ENCODE measurements at regions of chr5 and their contacts with region 1.

Region 1: GRCh38 chr5:154945695-154946301 is 4.9 kb downstream of the MRPL22 start:
- DNase-seq: no peak
- ATAC-seq: no peak
- H3K4me3 ChIP-seq: no peak overlapping the region
- H3K27ac ChIP-seq: no peak overlapping the region
- H3K4me1 ChIP-seq: no peaks in the 10 kb centered on the region; the same call in 1 of the 2 replicates
- H3K27me3 ChIP-seq: no peaks in the 10 kb centered on the region
- CTCF ChIP-seq: peak; percentile 40 to 46 (median 41); a peak in 4 of 6 replicates
- EP300 ChIP-seq: no peak
- POLR2A ChIP-seq: no peak
- RAD21 ChIP-seq: peak; percentile 48; the same call in 1 of the 2 replicates

Region 2: DNA sequence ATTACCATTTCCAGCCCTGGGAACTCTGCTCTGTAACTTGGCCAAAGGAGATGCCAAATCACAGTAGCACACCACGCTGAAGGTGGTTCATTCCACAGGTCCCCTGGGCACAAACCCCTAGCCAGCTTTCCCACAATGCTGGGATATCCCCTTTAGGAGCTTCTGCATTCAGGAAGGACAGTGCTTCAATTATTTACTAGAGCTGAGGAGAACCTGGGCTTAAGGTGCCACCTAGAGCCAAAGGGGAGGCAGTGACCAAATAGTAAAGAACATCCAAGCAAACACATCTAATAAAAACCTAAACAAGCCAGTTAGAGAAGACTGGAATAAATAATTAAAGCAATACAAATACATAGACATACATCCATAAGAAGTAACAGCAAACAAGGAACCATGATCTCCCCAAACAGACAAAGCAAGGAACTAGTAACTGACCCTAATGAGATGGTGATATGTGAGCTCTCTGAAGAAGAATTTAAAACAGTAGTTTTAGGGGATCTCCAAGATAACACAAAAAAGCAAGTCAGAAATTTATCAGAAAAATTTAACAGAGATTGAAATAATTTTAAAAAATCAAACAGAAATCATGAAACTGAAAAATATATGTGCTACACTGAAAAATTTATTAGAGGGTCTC is 82.3 kb after region 1 on chr5:
- CTCF ChIA-PET with region 1: interaction called, 10 read pairs
- POLR2A ChIA-PET with region 1: no interaction called
- RAD21 ChIA-PET with region 1: interaction called, 3 read pairs
- SMC1A ChIA-PET with region 1: interaction called, 6 read pairs
- in situ Hi-C with region 1: no loop called
- intact Hi-C with region 1: loop called (anchors 1 kb)
- DNase-seq: no peak
- ATAC-seq: peak; percentile 76
- H3K4me3 ChIP-seq: no peak overlapping the region
- H3K27ac ChIP-seq: no peak overlapping the region
- H3K4me1 ChIP-seq: no peaks in the 10 kb centered on the region
- H3K27me3 ChIP-seq: no peaks in the 10 kb centered on the region
- CTCF ChIP-seq: peak; percentile 34 to 46 (median 38); a peak in 5 of 6 replicates
- EP300 ChIP-seq: no peak
- POLR2A ChIP-seq: no peak
- RAD21 ChIP-seq: peak; percentile 63